ENCODE measurements at regions of chr13 and their contacts with region 1.

Region 1: DNA sequence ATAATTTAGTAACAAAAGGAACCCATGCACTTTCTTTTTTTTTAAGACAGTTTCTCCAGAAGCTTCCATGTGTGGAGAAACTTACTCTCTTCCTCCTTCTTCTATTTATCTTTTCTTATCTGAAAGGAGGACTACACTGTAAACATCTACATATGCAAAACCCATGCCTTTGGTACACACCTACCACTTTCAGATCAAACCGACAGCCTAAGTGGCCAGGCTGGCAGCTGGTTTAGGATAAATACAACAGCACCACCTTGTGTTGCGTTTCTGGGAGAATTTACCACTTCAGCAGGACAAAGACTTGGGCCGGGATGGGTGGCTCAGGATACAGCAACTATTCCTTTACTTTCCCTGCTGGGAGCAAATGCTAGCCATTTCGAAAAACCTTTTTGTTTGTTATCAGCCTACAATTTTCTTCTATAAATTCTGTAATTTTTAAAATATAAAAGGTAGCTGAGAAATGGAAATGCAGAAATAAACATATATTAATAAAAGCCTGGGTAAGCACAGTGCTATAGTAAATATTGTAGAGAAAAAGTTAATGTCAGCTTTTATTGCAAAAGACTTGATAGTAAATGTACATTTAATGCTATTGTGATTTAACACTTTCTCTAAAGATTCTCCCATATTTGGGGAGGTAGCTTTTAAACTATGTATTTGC is 94.0 kb upstream of the RFC3 start:
- DNase-seq: peak; percentile 84
- H3K4me3 ChIP-seq: no peak overlapping the region
- H3K27ac ChIP-seq: peak overlapping the region; percentile 28
- H3K4me1 ChIP-seq: peaks cover 6% of the 10 kb centered on the region
- H3K27me3 ChIP-seq: no peaks in the 10 kb centered on the region
- CTCF ChIP-seq: peak; percentile 70

Region 2: DNA sequence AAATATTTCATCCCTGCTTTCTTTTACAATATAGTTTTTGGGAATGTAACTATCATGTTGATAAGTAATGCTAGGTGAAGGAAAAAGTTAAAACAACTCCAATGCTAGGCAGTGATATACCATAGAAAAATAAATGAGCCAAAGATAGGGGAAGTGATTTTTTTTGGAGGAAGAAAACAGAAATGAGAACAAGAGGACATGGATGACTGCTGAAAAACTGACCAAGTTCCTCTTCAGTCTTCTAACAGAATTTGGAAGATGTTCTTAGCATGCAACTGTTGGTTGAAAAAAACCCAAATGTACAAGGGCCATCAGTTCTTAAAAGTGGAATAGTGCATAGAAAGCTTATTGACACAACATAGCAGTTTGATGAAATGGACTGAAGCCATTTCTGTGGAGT is 175.8 kb before region 1 on chr13:
- intact Hi-C with region 1: loop called (anchors 5 kb)
- DNase-seq: no peak
- H3K4me3 ChIP-seq: no peak overlapping the region
- H3K27ac ChIP-seq: no peak overlapping the region
- H3K4me1 ChIP-seq: peaks cover 9% of the 10 kb centered on the region
- H3K27me3 ChIP-seq: no peaks in the 10 kb centered on the region
- CTCF ChIP-seq: no peak

Region 3: GRCh38 chr13:33560726-33561125 is 163.2 kb before region 1 on chr13:
- intact Hi-C with region 1: loop called (anchors 5 kb)
- DNase-seq: no peak
- H3K4me3 ChIP-seq: no peak overlapping the region
- H3K27ac ChIP-seq: no peak overlapping the region
- H3K4me1 ChIP-seq: no peaks in the 10 kb centered on the region
- H3K27me3 ChIP-seq: no peaks in the 10 kb centered on the region
- CTCF ChIP-seq: no peak

Region 4: DNA sequence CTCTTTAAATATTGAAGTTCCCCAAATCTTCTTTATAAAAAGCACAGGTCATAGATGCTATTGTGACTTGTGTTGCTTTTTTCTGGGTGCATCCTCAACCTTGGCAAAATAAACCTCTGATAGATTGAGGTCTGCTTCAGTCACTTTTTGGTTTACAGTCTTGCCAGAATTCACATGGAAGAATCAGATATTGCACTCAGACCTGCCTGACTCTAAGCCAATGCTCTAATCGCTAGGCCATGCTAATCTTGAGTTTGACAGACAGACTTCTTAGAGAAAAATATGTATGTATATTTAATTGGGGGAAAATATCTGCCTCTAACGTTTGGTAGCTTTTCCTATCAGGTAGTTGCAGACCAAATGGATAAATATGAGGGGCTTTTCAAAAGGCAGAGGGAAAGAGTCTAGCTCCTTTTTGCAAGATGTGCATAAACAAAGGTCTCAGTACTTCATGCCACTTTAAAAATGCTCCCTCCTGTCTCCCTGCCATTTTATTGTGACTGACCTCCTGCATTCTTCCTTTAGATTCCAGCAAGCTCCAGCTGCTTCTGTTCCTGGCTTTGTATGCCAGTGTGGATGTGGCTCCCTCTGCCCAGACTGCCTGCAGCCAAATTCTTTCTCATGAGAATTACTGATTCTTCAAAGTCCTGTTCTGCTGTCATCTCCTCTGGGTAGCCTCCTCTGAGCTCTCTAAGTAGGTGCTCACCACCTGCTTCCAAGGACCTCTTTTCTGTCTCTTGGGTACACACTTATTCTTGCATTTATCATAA is 51.6 kb after region 1 on chr13:
- intact Hi-C with region 1: no loop called
- DNase-seq: no peak
- H3K4me3 ChIP-seq: no peak overlapping the region
- H3K27ac ChIP-seq: no peak overlapping the region
- H3K4me1 ChIP-seq: no peaks in the 10 kb centered on the region
- H3K27me3 ChIP-seq: no peaks in the 10 kb centered on the region
- CTCF ChIP-seq: no peak